ENCODE measurements at regions of chr13 and their contacts with region 1.

Region 1: DNA sequence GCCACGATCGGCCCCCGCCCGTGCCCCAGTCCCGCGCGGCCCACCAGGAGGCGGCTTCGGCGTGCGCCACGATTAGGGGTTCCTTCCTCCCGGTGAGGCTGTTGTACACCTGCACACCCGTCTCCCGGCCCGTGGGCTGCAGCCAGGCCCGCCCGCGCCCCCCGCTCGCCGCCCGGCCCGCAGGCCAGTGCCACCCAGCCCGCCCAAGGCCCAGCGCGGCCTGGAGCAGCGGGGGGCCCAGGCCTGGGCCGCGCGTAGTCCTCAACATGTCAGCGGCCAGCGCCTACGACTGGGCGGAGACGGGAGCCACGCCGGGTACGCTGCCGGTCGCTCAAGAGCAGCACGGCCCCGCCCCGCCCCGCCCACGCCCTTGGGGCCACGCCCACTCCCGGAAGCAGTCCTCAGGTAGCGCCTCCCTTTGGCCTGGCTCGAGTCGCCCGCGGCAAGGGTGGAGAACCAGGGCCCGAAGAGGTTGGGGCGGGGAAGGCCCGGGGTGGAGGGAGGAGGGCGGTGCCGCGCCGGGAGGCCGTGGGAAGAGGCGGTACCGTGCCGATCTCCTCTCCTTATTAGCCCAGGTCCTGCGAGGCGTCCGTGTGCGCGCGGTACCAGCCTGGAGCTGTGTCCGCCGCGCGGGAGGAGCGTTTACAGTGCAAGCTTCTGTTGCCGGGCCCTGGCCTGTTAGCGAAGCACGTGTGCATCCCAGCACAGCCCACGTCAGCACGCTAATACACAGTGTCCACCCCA is at the start of gene CARS2:
- DNase-seq: peak; percentile 88
- H3K4me3 ChIP-seq: peak within 1 kb of the TSS; percentile 95
- H3K27ac ChIP-seq: peak within 1 kb of the TSS; percentile 53
- H3K4me1 ChIP-seq: peaks cover 63% of the 10 kb centered on the region
- CTCF ChIP-seq: no peak
- total RNA-seq, gene CARS2: 45.0 and 50.9 TPM in 2 replicates

Region 2: GRCh38 chr13:110555601-110556223 is 150.3 kb before region 1 on chr13:
- CTCF ChIA-PET with region 1: no interaction called
- POLR2A ChIA-PET with region 1: no interaction called
- intact Hi-C with region 1: no loop called
- DNase-seq: peak; percentile 9
- H3K4me3 ChIP-seq: no peak overlapping the region
- H3K27ac ChIP-seq: no peak overlapping the region
- H3K4me1 ChIP-seq: no peaks in the 10 kb centered on the region
- CTCF ChIP-seq: no peak

Region 3: GRCh38 chr13:110676595-110677587 is 29.1 kb before region 1 on chr13:
- CTCF ChIA-PET with region 1: no interaction called
- POLR2A ChIA-PET with region 1: no interaction called
- intact Hi-C with region 1: loop called (anchors 2 kb)
- DNase-seq: peak; percentile 61
- H3K4me3 ChIP-seq: peak overlapping the region; percentile 43
- H3K27ac ChIP-seq: peak overlapping the region; percentile 96
- H3K4me1 ChIP-seq: peaks cover 26% of the 10 kb centered on the region
- CTCF ChIP-seq: no peak

Measured in OCI-LY7 (cell line).